ENCODE measurements at regions of chr11 and their contacts with region 1.

Region 1: GRCh38 chr11:58579192-58580129 is 598 bp downstream of the ZFP91 start:
- DNase-seq: peak; percentile 94 to 97 (median 96)
- ATAC-seq: peak; percentile 78 to 79
- H3K4me3 ChIP-seq: peak overlapping the region; percentile 87
- H3K27ac ChIP-seq: peak overlapping the region; percentile 98
- H3K4me1 ChIP-seq: peaks cover 2% of the 10 kb centered on the region
- H3K27me3 ChIP-seq: no peaks in the 10 kb centered on the region

Region 2: DNA sequence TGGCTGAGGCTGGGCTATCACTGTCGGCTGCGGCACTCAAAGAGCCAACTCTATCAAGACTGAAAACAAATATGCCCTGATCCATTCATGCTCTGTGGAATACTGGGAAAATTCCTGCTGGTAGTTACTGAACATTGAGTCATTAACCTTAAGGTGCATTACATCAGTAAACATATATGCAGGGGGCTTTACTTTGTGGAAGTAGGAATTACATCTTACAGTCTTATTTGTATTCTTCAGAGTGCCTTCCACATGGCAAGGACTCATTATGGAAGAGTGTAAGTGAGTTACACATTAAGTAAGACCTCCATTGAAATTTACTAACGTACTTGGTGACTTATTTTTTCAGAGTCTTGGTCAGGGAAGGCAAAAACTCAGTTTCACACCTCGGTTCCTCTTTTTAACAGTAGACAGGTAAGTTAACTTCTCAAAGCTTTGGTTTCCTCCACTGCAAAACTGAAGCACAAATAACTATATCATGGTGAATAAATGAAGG is 76.1 kb before region 1 on chr11:
- intact Hi-C with region 1: no loop called
- DNase-seq: no peak
- ATAC-seq: no peak
- H3K4me3 ChIP-seq: no peak overlapping the region
- H3K27ac ChIP-seq: no peak overlapping the region
- H3K4me1 ChIP-seq: no peaks in the 10 kb centered on the region
- H3K27me3 ChIP-seq: no peaks in the 10 kb centered on the region

Region 3: DNA sequence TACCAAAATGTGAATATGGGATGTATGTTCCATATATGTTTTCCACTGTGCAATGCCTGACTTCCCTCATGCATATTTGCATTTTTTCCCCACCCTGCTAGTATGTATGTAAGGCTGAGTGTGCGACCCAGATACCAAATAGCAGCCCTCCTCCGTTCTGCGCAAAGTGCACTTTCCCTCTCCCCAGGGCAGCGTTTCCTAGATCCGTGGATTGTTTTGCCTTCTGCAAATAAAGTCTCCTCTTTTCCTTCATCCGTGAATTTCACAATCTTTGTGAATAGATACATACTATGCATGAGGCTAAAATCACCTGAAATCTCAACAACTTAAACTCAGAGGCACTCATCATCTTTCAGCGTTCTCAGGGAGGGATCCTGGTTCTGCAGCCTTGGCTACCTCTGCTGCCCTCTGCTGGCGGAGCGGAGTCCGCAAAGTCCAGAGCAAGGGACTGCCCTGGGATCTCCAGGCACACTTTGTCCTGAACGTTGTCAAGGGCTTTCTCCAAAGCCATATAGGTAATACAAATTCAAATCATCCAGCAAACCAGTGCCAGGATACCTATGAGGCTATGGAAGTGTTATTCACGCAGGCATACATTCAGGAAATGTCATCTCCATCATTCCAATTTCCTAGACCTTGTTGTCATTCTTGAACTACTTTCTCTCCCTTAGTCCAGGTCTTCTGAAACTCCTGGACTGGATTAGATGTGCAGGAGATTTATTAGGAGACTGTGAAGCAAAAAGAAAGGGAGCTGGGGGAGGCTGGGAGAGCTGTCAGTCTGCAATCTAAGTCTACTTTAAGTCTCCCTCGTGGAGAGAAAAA is 96.1 kb after region 1 on chr11:
- intact Hi-C with region 1: loop called in 3 of 4 experiments (anchors 10 kb)
- DNase-seq: peak; percentile 71 to 92 (median 89)
- ATAC-seq: peak; percentile 93 to 95
- H3K4me3 ChIP-seq: no peak overlapping the region
- H3K27ac ChIP-seq: no peak overlapping the region
- H3K4me1 ChIP-seq: no peaks in the 10 kb centered on the region
- H3K27me3 ChIP-seq: no peaks in the 10 kb centered on the region

Measured in right cardiac atrium (tissue), 5 donors.